B cell (primary cell): ENCODE measurements at regions of chr19 and their contacts with region 1.

Region 1: DNA sequence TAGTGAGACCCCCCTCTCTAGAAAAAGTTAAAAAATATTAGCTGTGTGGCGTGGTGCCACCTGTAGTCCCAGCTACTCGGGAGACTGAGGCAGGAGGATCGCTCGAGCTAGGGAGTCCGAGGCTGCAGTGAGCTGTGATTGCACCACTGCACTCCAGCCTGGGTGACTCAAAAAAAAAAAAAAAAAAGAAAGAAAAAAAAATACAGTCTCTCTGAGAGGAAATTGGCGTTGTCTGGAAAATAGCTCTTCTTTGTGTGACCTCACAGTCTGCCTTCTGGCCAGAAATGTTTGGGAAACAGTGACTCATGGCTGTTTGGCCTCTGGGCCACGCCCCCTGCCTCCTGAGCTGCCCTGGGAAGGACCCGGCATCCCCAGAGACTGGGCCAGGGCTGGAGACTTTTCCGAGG is 10.7 kb downstream of the MARCHF2 start:
- DNase-seq: no peak
- ATAC-seq: no peak
- H3K4me3 ChIP-seq: no peak overlapping the region
- H3K4me3 Mint-ChIP-seq: no peak overlapping the region
- H3K27ac ChIP-seq: no peak overlapping the region
- H3K27ac Mint-ChIP-seq: no peak overlapping the region
- H3K4me1 ChIP-seq: no peaks in the 10 kb centered on the region
- H3K4me1 Mint-ChIP-seq: no peaks in the 10 kb centered on the region
- H3K27me3 ChIP-seq: no peaks in the 10 kb centered on the region
- H3K27me3 Mint-ChIP-seq: no peaks in the 10 kb centered on the region
- CTCF ChIP-seq: no peak

Region 2: GRCh38 chr19:8615813-8616596 is 192.2 kb after region 1 on chr19:
- CTCF ChIA-PET with region 1: no interaction called
- POLR2A ChIA-PET with region 1: interaction called, 13 read pairs
- intact Hi-C with region 1: no loop called
- DNase-seq: peak; percentile 48
- ATAC-seq: no peak
- H3K4me3 ChIP-seq: no peak overlapping the region
- H3K4me3 Mint-ChIP-seq: no peak overlapping the region
- H3K27ac ChIP-seq: no peak overlapping the region
- H3K27ac Mint-ChIP-seq: no peak overlapping the region
- H3K4me1 ChIP-seq: no peaks in the 10 kb centered on the region
- H3K4me1 Mint-ChIP-seq: peaks cover 4% of the 10 kb centered on the region
- H3K27me3 ChIP-seq: peaks cover 0 to 8% (median 0%) of the 10 kb centered on the region in 4 experiments
- H3K27me3 Mint-ChIP-seq: peaks cover 17% of the 10 kb centered on the region
- CTCF ChIP-seq: peak; percentile 74